ENCODE measurements at regions of chr11 and their contacts with region 1.

Region 1: DNA sequence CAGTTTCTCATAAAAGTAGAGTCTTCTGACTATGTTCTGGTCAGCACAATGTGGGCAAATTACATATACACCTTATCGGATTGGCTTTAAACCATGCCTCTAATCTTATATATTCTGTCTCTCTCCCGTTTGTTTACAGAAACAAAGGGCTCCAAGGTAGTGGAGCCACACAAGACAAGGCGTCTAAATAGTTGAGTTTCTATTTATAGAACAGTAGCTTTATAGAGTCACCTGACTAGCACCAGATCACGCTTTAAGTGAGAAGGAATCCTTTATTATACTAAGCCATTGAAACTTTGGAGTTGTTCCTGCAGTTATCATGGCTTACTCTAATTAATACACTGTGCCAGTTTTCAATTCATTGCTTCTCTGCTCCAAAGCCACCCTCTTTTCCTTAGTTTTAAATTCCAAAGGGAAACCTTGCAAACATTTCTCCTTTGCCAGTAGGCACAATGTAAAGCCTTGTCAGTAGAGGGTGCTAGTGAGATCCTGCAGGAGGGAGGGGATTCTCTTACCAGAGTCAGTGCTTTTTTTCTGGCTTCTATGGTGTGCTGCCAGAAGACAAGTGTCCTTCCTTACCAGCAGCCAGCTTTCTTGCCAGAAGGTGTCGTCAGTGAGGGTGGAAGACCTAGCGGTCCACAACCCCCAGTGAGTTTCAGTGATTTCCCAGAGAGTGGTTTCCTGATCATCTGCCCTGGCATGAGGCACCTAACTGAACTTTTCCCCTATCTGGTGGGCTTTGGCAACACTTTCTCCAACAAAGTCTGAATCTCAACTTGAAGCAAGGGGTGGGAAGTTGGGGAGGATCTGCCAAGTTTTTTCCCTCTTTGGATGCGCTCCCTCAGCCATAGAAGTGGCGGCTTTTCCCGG is 71.7 kb downstream of the RAB38 start:
- DNase-seq: peak; percentile 53
- ATAC-seq: peak; percentile 96
- H3K4me3 ChIP-seq: no peak overlapping the region
- H3K27ac ChIP-seq: no peak overlapping the region
- H3K4me1 ChIP-seq: peaks cover 3% of the 10 kb centered on the region
- H3K27me3 ChIP-seq: no peaks in the 10 kb centered on the region; a peak in 1 of 4 replicates
- CTCF ChIP-seq: peak; percentile 77 to 90 (median 85)
- EP300 ChIP-seq: no peak
- POLR2A ChIP-seq: no peak
- RAD21 ChIP-seq: peak; percentile 83

Region 2: GRCh38 chr11:88016392-88017170 is 87.0 kb before region 1 on chr11:
- CTCF ChIA-PET with region 1: interaction called, 15 read pairs
- POLR2A ChIA-PET with region 1: interaction called, 3 read pairs
- RAD21 ChIA-PET with region 1: no interaction called
- SMC1A ChIA-PET with region 1: interaction called, 6 read pairs
- in situ Hi-C with region 1: no loop called
- intact Hi-C with region 1: no loop called
- DNase-seq: peak; percentile 27
- ATAC-seq: peak; percentile 98
- H3K4me3 ChIP-seq: no peak overlapping the region
- H3K27ac ChIP-seq: no peak overlapping the region
- H3K4me1 ChIP-seq: no peaks in the 10 kb centered on the region
- H3K27me3 ChIP-seq: no peaks in the 10 kb centered on the region; a peak in 1 of 4 replicates
- CTCF ChIP-seq: peak; percentile 72 to 88 (median 76); a peak in 5 of 6 replicates
- EP300 ChIP-seq: no peak
- POLR2A ChIP-seq: no peak
- RAD21 ChIP-seq: peak; percentile 96

Region 3: GRCh38 chr11:88194990-88195389 is 91.4 kb after region 1 on chr11:
- CTCF ChIA-PET with region 1: no interaction called
- POLR2A ChIA-PET with region 1: no interaction called
- RAD21 ChIA-PET with region 1: no interaction called
- SMC1A ChIA-PET with region 1: no interaction called
- in situ Hi-C with region 1: no loop called
- intact Hi-C with region 1: loop called (anchors 1 kb)
- DNase-seq: no peak
- ATAC-seq: peak; percentile 93
- H3K4me3 ChIP-seq: no peak overlapping the region
- H3K27ac ChIP-seq: no peak overlapping the region
- H3K4me1 ChIP-seq: peaks cover 22% of the 10 kb centered on the region
- H3K27me3 ChIP-seq: no peaks in the 10 kb centered on the region
- CTCF ChIP-seq: no peak
- EP300 ChIP-seq: 0 out of 4 replicates have a peak, but pooled peaks have one; percentile 28 to 52
- POLR2A ChIP-seq: no peak
- RAD21 ChIP-seq: no peak

Region 4: DNA sequence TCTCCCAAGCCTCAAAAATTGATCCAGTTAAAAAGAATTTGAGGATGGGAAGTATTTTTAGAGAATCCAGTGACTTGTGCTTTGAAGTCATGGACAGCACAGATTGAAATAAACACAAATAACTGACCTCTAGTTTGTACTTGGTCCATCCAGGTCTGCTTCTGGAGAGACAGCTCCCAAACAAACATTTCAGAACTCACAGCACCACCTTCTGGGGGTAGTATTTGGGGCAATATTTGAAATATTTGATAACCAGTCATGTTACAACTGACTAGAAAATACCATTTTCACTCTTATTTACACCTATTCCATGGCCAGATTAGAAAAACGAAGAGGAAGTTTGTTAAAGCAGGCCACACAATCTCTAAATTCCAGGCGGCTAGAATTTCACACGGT is 177.7 kb after region 1 on chr11:
- CTCF ChIA-PET with region 1: interaction called, 20 read pairs
- POLR2A ChIA-PET with region 1: no interaction called
- RAD21 ChIA-PET with region 1: interaction called, 4 read pairs
- SMC1A ChIA-PET with region 1: interaction called, 12 read pairs
- in situ Hi-C with region 1: no loop called
- intact Hi-C with region 1: loop called (anchors 5 kb)
- DNase-seq: no peak
- ATAC-seq: peak; percentile 48; the same call in 2 of the 3 replicates
- H3K4me3 ChIP-seq: no peak overlapping the region
- H3K27ac ChIP-seq: no peak overlapping the region
- H3K4me1 ChIP-seq: no peaks in the 10 kb centered on the region
- H3K27me3 ChIP-seq: no peaks in the 10 kb centered on the region
- CTCF ChIP-seq: peak in 2 of 3 experiments; percentile 31 to 39; a peak in 2 of 6 replicates
- EP300 ChIP-seq: no peak
- POLR2A ChIP-seq: no peak
- RAD21 ChIP-seq: peak; percentile 43

Region 5: DNA sequence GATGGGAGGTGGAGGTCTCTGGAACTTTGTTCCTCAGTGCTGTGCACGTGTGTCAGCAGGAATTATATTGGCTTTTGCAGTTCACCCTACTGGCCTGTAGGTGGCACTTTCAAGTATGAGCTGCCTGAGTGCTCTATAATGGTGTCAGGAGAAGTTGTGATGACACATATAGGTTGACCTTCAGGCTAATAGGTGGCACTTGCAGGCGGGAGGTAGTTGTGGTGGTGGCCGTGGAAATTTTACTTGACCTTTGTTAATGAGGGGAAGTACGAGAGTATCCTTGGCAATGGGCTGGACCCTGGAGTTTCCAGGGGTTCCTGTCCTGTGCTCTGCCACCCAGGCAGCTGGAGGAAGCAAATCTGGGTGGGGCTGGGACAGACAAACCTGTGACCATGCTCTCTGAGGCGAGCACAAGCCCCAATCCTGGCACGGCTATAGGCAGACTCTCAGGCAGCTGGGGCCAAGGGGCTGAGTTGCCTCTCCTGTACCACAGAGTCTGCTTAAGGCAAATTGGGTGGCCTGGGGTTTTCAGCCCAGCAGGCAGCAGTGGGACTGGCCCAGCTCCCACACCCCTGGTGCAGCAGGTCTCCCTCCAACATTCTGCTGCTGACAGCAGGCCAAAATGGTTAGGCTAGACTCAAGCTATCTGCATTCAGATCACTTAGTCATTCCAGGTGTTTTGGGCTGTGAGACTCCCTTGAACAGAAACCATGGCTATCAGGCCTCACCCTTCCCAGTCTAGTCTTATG is 381.5 kb after region 1 on chr11:
- CTCF ChIA-PET with region 1: no interaction called
- POLR2A ChIA-PET with region 1: no interaction called
- RAD21 ChIA-PET with region 1: no interaction called
- SMC1A ChIA-PET with region 1: interaction called, 12 read pairs
- in situ Hi-C with region 1: no loop called
- intact Hi-C with region 1: no loop called
- DNase-seq: peak; percentile 27
- ATAC-seq: peak; percentile 94
- H3K4me3 ChIP-seq: no peak overlapping the region
- H3K27ac ChIP-seq: no peak overlapping the region
- H3K4me1 ChIP-seq: peaks cover 8% of the 10 kb centered on the region
- H3K27me3 ChIP-seq: no peaks in the 10 kb centered on the region
- CTCF ChIP-seq: peak; percentile 63 to 87 (median 79)
- EP300 ChIP-seq: no peak
- POLR2A ChIP-seq: no peak
- RAD21 ChIP-seq: peak; percentile 61

Region 6: DNA sequence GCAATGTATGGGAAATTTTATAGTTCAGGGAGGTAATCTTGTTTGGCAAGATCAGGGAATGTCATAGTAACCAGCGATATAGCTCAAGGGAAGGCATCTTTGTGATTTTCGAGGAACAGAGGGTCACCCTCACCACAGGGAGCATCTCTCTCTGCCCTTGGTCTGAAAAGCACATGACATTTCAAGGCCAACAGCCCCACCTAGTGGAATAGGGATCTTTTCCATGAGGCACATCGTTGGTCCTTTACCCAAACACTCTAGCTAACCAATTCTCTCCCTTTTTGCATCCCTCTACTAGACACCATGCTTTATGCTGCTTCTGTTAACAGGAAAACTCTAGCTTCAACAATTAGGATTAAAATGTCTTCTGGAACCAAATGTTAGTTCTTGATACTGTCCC is 783.2 kb after region 1 on chr11:
- CTCF ChIA-PET with region 1: interaction called, 8 read pairs
- POLR2A ChIA-PET with region 1: no interaction called
- RAD21 ChIA-PET with region 1: no interaction called
- SMC1A ChIA-PET with region 1: no interaction called
- in situ Hi-C with region 1: no loop called
- intact Hi-C with region 1: loop called (anchors 5 kb)
- DNase-seq: peak; percentile 11
- ATAC-seq: peak; percentile 98
- H3K4me3 ChIP-seq: no peak overlapping the region
- H3K27ac ChIP-seq: no peak overlapping the region
- H3K4me1 ChIP-seq: no peaks in the 10 kb centered on the region
- H3K27me3 ChIP-seq: no peaks in the 10 kb centered on the region
- CTCF ChIP-seq: peak; percentile 62 to 64 (median 62); a peak in 5 of 6 replicates
- EP300 ChIP-seq: no peak
- POLR2A ChIP-seq: no peak
- RAD21 ChIP-seq: peak; percentile 80